ENCODE measurements at regions of chr13 and their contacts with region 1.

Region 1: GRCh38 chr13:28718543-28719226 is at the start of gene SLC46A3:
- DNase-seq: peak; percentile 100
- H3K4me3 ChIP-seq: peak within 1 kb of the TSS; percentile 82
- H3K27ac ChIP-seq: peak within 1 kb of the TSS; percentile 99
- H3K4me1 ChIP-seq: peaks cover 55% of the 10 kb centered on the region
- H3K27me3 ChIP-seq: no peaks in the 10 kb centered on the region
- CTCF ChIP-seq: peak; percentile 38
- total RNA-seq, gene SLC46A3: 16.7 TPM

Region 2: DNA sequence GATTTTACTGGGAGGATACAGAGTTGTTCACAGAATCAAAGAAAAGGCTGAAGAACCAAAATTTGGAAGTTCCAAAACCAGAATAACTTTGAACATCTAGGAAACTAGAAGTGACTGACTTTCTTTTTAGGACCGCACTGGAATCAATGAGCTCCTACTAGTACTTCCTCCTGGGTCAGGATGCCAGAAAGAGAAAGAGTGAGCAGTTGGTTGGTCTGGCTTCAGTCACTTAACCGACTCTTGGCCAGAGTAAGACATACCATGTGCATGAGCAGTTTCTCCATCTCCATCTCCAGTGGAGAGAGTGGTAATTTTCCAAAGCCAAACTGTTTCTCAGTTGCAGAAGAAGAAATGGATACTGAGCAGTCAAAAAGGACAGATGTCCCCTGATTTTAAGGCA is 74.3 kb after region 1 on chr13:
- intact Hi-C with region 1: loop called (anchors 10 kb)
- DNase-seq: no peak
- H3K4me3 ChIP-seq: no peak overlapping the region
- H3K27ac ChIP-seq: no peak overlapping the region
- H3K4me1 ChIP-seq: peaks cover 6% of the 10 kb centered on the region
- H3K27me3 ChIP-seq: peaks cover 23% of the 10 kb centered on the region
- CTCF ChIP-seq: no peak